ENCODE measurements at regions of chr22 and their contacts with region 1.

Region 1: DNA sequence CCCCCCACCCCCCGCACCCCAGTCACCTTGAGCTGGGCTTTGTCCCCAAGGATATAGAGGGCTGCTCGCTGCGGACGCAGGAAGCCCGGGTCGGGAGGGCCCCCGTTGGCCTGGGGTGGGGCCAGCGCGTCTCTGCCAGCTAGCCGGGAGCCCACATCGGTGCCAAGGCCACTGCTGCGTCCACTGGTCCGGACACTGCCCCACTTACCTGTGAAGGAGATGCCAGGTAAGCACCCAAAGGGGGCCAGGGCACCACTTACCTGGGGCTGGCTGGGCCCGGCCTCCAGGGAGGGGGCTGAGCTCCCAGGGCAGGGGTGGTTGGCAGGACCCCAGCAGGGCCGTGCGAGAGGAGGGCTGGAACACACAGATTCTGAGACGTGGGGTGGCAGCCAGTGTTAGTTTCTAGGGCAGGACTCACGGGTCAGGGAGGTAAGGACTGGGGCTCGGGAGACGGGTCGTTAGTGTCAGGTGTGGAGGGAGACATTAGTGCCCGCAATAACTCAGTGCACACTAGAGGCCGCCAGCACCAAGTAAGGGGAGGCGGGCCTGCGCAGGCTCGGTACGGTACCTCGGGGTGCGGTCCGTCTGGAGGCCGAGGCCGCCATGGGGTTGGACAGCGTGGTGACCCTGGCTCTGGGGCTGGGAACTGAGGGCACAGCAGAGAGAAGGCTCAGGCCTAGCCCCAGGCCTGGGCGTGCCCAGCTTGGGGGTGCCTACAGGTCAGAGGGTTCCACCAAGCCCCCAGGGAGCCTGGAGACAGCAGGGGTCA is 18.2 kb downstream of the SBF1 start:
- DNase-seq: no peak
- H3K4me3 ChIP-seq: no peak overlapping the region
- H3K27ac ChIP-seq: no peak overlapping the region
- H3K27me3 ChIP-seq: no peaks in the 10 kb centered on the region
- CTCF ChIP-seq: peak; percentile 25

Region 2: GRCh38 chr22:50399751-50400331 is 56.8 kb before region 1 on chr22:
- CTCF ChIA-PET with region 1: no interaction called
- POLR2A ChIA-PET with region 1: no interaction called
- DNase-seq: no peak
- H3K4me3 ChIP-seq: no peak overlapping the region
- H3K27ac ChIP-seq: no peak overlapping the region
- H3K27me3 ChIP-seq: no peaks in the 10 kb centered on the region
- CTCF ChIP-seq: peak; percentile 28; the same call in 1 of the 2 replicates

Region 3: GRCh38 chr22:50490531-50491308 is 34.1 kb after region 1 on chr22:
- CTCF ChIA-PET with region 1: interaction called, 12 read pairs
- POLR2A ChIA-PET with region 1: no interaction called
- DNase-seq: no peak
- H3K4me3 ChIP-seq: no peak overlapping the region
- H3K27ac ChIP-seq: no peak overlapping the region
- H3K27me3 ChIP-seq: no peaks in the 10 kb centered on the region
- CTCF ChIP-seq: no peak

Region 4: DNA sequence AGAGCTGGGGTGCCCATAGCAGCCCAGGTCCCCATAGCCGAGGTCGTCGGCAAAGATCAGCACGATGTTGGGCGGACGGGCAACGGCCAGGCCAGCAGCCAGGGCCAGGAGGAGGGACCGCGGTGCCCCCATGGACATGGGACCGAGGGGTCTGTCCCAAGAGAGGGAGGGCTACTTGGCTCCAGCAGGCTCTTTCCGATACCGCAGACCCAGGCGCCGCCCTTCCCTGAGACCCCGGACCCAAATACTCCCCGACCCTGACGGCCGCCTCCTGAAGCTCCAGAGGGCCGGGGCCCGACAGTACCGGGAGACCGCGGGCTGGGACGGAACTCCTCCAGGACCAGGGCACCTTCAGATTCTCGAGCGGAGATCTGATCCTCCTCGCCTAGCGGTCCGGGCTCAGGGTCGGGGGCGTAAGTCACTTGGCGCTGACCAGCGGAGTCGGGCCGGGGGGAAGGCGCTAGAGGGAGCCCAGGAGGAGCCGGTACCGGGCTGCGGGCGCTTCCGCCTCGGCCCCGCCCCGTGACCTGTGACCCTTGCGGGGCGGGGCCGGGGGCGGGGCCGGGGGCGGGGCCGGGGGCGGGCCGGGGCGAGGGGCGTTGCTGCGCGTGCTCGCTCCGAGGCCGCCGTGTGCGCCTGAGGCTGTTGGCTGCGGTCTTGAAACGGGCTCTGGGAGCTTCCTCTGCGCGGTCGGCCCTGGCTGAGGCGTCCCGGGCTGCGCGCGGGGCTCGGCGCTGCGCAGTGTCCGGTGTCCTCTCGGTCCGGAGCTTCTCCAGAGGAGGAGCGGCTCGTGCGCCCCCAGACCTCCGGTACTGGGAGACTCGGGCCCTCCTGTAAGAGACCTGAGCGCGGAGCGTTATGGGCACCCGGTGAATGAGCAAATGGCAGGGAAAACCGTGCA is 171.2 kb after region 1 on chr22 and contains the start of gene ARSA:
- CTCF ChIA-PET with region 1: no interaction called
- POLR2A ChIA-PET with region 1: no interaction called
- DNase-seq: peak; percentile 43
- H3K4me3 ChIP-seq: peak within 1 kb of the TSS; percentile 84
- H3K27ac ChIP-seq: peak within 1 kb of the TSS; percentile 31
- H3K27me3 ChIP-seq: peaks cover 3% of the 10 kb centered on the region
- CTCF ChIP-seq: peak; percentile 38
- polyA plus RNA-seq, gene ARSA: 14.3 and 22.0 TPM in 2 replicates